ENCODE measurements at regions of chr17 and their contacts with region 1.

Region 1: GRCh38 chr17:48429638-48430586 is at the start of gene SKAP1:
- DNase-seq: no peak
- ATAC-seq: no peak
- H3K4me3 ChIP-seq: no peak within 1 kb of the TSS
- H3K27ac ChIP-seq: no peak within 1 kb of the TSS
- H3K4me1 ChIP-seq: no peaks in the 10 kb centered on the region
- H3K27me3 ChIP-seq: no peaks in the 10 kb centered on the region
- CTCF ChIP-seq: no peak
- total RNA-seq, gene SKAP1: not detected in 2 replicates

Region 2: GRCh38 chr17:48539177-48539576 is 109.3 kb after region 1 on chr17:
- CTCF ChIA-PET with region 1: no interaction called
- POLR2A ChIA-PET with region 1: no interaction called
- intact Hi-C with region 1: loop called (anchors 5 kb)
- DNase-seq: peak; percentile 57
- ATAC-seq: peak; percentile 68
- H3K4me3 ChIP-seq: no peak overlapping the region
- H3K27ac ChIP-seq: no peak overlapping the region
- H3K4me1 ChIP-seq: 0 out of 2 replicates have a peak, but pooled peaks cover 3% of the 10 kb centered on the region
- H3K27me3 ChIP-seq: no peaks in the 10 kb centered on the region
- CTCF ChIP-seq: no peak

Measured in PC-3 (cell line).